ENCODE measurements at regions of chr3 and their contacts with region 1.

Region 1: DNA sequence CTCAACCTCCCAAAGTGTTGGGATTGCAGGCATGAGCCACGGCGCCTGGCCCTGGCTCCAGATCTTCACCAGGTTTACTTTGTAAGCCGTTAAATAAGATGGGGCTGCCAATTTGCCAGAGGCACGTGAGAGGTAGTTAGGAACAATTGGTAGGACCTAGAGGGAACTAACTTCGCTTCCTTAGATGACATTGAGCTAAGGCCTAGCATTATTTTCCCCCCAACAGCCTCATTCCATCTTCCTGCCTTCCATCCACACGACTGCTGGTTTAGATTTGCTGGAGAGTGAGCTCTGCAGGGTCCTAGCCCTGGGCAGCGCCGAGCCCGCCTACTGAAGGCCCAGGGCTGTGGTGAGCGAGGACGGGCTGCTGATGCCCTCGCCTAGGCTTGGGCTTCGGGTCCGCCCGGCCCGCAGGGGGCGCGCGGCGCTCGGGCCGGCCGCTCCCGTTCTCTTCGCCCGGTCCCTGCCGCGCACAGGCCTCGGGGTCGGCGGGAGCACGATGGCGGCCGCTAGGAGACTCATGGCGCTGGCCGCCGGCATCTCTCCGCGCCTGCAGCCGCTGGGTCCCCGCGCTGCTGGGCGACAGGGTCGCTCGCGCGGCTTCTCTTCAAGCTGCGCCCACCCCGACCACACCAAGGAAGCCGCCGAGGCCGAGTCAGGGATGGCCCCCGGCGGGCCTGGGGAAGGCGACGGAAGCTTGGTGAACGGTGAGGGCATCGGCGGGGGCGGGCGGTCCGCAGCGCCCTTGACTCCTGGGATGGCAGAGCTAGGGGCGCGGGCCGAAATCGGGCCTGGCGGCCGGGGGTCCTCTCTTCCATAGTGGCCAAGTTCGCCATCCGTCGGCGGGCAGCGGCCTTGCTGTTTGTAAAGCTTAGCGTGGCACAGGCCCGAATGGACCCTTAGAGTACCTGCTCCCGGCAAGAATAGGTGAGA is 21.9 kb downstream of the DHX30 start:
- DNase-seq: peak; percentile 98
- H3K4me3 ChIP-seq: peak overlapping the region; percentile 74 to 95
- H3K27ac ChIP-seq: peak overlapping the region; percentile 66 to 69
- H3K4me1 ChIP-seq: peaks cover 3 to 15% of the 10 kb centered on the region in 2 experiments; a peak in 1 of 4 replicates
- H3K27me3 ChIP-seq: no peaks in the 10 kb centered on the region
- CTCF ChIP-seq: peak; percentile 78
- EP300 ChIP-seq: no peak
- RAD21 ChIP-seq: peak; percentile 25; the same call in 1 of the 2 replicates

Region 2: GRCh38 chr3:47522082-47522987 is 302.5 kb before region 1 on chr3:
- CTCF ChIA-PET with region 1: interaction called, 11 read pairs
- POLR2A ChIA-PET with region 1: no interaction called
- DNase-seq: peak; percentile 79
- H3K4me3 ChIP-seq: no peak overlapping the region; a peak in 1 of 4 replicates
- H3K27ac ChIP-seq: no peak overlapping the region
- H3K4me1 ChIP-seq: peaks cover 0 to 4% of the 10 kb centered on the region in 2 experiments; a peak in 1 of 4 replicates
- H3K27me3 ChIP-seq: no peaks in the 10 kb centered on the region
- CTCF ChIP-seq: peak; percentile 89
- EP300 ChIP-seq: no peak
- RAD21 ChIP-seq: peak; percentile 95

Region 3: GRCh38 chr3:47780741-47781684 is 43.8 kb before region 1 on chr3:
- CTCF ChIA-PET with region 1: no interaction called
- POLR2A ChIA-PET with region 1: no interaction called
- DNase-seq: peak; percentile 86
- H3K4me3 ChIP-seq: peak overlapping the region; percentile 67 to 99
- H3K27ac ChIP-seq: peak overlapping the region; percentile 88 to 93
- H3K4me1 ChIP-seq: peaks cover 0 to 3% of the 10 kb centered on the region in 2 experiments; a peak in 2 of 4 replicates
- H3K27me3 ChIP-seq: no peaks in the 10 kb centered on the region
- CTCF ChIP-seq: no peak
- EP300 ChIP-seq: no peak
- RAD21 ChIP-seq: no peak

Region 4: DNA sequence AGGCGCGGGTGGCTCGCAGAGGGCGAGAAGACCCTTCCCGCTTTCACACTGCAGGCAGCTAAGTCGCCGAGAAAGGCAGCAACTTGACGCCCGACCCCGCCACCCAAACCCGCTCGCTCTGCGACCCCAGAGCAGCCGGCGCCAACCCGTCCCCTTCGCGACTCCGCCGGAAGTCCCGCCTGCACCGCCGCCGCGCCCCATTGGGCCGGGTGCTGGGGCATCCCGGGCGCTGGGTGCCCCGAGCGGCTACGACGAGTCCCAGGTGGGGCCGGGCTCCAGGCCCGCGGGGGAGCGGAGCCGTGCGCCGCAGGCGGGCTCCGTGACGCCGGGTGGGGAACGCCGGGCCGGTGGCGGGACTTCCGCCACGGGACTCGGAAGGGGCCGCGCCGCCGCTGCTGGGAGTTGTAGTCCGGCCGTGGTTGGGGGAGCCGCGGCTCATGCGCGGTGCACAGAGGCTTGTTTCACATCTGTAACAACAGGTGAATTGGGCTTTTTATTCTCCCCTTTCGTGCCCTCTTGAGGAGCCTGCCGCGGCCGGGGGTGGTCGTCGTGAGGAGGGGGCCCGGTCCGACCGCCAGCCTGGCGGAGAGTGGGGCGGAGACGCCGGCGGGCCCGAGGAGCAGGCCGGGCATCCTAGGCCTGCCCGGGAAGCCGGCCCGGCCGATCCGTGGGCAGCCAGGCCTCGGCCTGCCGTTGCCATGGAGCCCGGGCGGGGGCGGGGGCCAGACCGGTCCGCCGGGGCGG is 21.9 kb before region 1 on chr3 and contains the start of gene DHX30:
- CTCF ChIA-PET with region 1: interaction called, 14 read pairs
- POLR2A ChIA-PET with region 1: interaction called, 4 read pairs
- DNase-seq: peak; percentile 94
- H3K4me3 ChIP-seq: peak within 1 kb of the TSS; percentile 66 to 100
- H3K27ac ChIP-seq: peak within 1 kb of the TSS; percentile 91 to 93
- H3K4me1 ChIP-seq: peaks cover 0 to 4% of the 10 kb centered on the region in 2 experiments; a peak in 2 of 4 replicates
- H3K27me3 ChIP-seq: no peaks in the 10 kb centered on the region
- CTCF ChIP-seq: no peak
- EP300 ChIP-seq: no peak
- RAD21 ChIP-seq: no peak
- polyA plus RNA-seq, gene DHX30: 86.3 and 90.4 TPM in 2 replicates

Region 5: DNA sequence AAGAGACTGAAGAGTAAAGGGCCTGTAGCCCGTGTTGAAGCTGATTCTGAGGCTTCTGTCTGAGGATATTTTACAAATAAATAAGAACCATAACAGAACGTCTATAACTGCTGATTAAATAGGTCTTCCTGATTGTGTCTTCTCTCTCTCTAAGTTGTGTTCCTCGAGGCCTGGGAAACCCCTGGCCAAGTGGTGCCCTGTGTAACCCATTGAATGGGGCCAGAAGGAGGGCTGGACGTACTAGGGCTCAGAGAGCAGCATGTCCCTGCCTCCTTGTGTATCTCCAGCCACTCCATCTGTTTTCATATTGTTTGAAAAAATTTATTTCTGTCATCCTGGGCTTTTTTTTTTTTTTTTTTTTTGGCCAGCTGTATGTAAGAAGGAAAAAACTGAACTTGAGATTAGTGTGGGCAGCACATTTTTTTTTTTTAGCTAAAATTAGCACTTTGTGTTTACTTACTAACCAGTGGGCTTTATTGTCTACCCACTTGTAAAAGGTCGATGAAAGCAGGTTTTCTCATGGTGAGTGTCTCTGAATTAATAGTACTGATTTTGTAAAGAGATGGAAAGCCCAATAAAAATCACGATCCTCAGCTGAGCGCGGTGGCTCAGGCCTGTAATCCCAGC is 11.1 kb before region 1 on chr3:
- CTCF ChIA-PET with region 1: interaction called, 40 read pairs
- POLR2A ChIA-PET with region 1: interaction called, 8 read pairs
- DNase-seq: no peak
- H3K4me3 ChIP-seq: no peak overlapping the region
- H3K27ac ChIP-seq: no peak overlapping the region
- H3K4me1 ChIP-seq: no peaks in the 10 kb centered on the region
- H3K27me3 ChIP-seq: no peaks in the 10 kb centered on the region
- CTCF ChIP-seq: no peak
- EP300 ChIP-seq: no peak
- RAD21 ChIP-seq: no peak

Region 6: GRCh38 chr3:48151058-48151806 is 326.4 kb after region 1 on chr3:
- CTCF ChIA-PET with region 1: interaction called, 38 read pairs
- POLR2A ChIA-PET with region 1: interaction called, 4 read pairs
- DNase-seq: peak; percentile 84
- H3K4me3 ChIP-seq: peak overlapping the region in 1 of 2 experiments; percentile 47; a peak in 1 of 4 replicates
- H3K27ac ChIP-seq: no peak overlapping the region
- H3K4me1 ChIP-seq: peaks cover 0 to 5% of the 10 kb centered on the region in 2 experiments; a peak in 2 of 4 replicates
- H3K27me3 ChIP-seq: no peaks in the 10 kb centered on the region
- CTCF ChIP-seq: peak; percentile 89
- EP300 ChIP-seq: no peak
- RAD21 ChIP-seq: peak; percentile 99

Region 7: DNA sequence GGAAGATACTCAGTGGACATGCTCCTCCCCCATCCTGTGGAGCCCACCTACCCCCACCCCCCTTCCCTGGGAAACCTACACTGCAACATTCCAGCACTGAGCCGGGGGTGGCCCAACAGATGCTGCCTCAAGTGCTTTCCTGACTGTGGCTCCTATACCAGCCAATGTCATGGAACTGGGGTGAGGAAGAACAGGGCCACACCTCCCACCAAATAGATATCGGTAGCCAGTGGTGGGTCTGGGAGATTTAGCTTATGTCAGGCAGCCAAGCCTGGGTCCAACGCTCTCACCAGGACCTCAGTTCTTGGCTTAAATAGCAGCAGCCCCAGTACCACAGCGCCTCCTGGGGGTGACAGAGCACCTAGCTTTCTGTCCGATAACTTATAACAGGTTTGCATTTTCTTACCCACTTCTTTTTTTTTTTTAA is 333.2 kb after region 1 on chr3:
- CTCF ChIA-PET with region 1: interaction called, 38 read pairs
- POLR2A ChIA-PET with region 1: no interaction called
- DNase-seq: peak; percentile 52
- H3K4me3 ChIP-seq: no peak overlapping the region; a peak in 1 of 4 replicates
- H3K27ac ChIP-seq: no peak overlapping the region
- H3K4me1 ChIP-seq: no peaks in the 10 kb centered on the region; a peak in 1 of 4 replicates
- H3K27me3 ChIP-seq: no peaks in the 10 kb centered on the region
- CTCF ChIP-seq: peak; percentile 83
- EP300 ChIP-seq: no peak
- RAD21 ChIP-seq: peak; percentile 60

Measured in SK-N-SH (cell line).